Heart right ventricle (tissue), 16 donors: ENCODE measurements at regions of chr2 and their contacts with region 1.

Region 1: GRCh38 chr2:1665745-1666505 is 78.4 kb downstream of the PXDN start:
- DNase-seq: no peak
- ATAC-seq: peak in 1 of 8 donors; percentile 33
- H3K4me3 ChIP-seq: no peak overlapping the region
- H3K27ac ChIP-seq: no peak overlapping the region
- H3K4me1 ChIP-seq: no peaks in the 10 kb centered on the region
- H3K27me3 ChIP-seq: no peaks in the 10 kb centered on the region
- CTCF ChIP-seq: no peak

Region 2: GRCh38 chr2:1278861-1279260 is 387.1 kb before region 1 on chr2:
- intact Hi-C with region 1: no loop called
- DNase-seq: no peak
- ATAC-seq: no peak
- H3K4me3 ChIP-seq: no peak overlapping the region
- H3K27ac ChIP-seq: no peak overlapping the region
- H3K4me1 ChIP-seq: peaks cover 0 to 20% (median 0%) of the 10 kb centered on the region in 9 donors
- H3K27me3 ChIP-seq: peaks cover 0 to 6% (median 0%) of the 10 kb centered on the region in 7 donors
- CTCF ChIP-seq: no peak

Region 3: DNA sequence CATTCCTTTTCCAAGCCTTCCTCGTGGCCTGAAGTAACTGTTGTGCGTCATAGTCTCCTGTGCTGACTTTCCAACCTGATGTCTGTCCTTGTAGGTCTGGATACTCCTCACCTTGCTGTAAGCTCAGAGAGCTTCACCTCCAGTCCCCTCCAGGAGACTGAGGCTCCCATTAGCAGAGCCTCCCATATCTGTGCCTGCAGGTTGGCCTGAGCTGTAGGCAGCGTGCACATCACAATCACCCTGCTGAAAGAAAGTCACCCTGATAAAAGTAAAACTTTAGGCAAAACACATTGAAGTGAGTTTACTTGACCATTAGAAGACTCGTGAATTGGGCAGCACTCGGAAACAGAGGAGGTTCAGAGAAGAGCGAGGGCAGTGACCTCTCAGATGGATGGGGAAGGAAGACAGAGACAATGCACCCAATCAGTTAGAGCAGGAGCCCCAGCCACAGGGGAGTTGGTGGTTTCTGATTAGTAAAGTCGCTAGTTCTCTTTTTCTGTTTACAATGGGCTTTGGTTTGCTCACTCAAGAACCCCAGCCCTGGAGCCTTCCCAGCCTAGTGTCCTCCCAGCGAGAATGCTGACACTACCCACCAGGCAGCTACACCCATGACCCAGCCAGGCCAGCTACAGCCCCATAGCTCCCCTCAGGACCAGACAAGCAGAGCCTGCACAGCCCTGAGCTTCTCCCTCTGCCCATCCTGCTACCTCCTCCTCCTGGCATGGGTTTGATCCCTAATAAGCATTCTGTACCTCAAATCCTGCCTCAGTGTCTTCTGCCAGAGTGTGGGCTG is 264.8 kb before region 1 on chr2:
- intact Hi-C with region 1: no loop called
- DNase-seq: no peak
- ATAC-seq: no peak
- H3K4me3 ChIP-seq: no peak overlapping the region
- H3K27ac ChIP-seq: no peak overlapping the region
- H3K4me1 ChIP-seq: no peaks in the 10 kb centered on the region
- H3K27me3 ChIP-seq: peaks cover 0 to 4% (median 0%) of the 10 kb centered on the region in 7 donors
- CTCF ChIP-seq: no peak

Region 4: DNA sequence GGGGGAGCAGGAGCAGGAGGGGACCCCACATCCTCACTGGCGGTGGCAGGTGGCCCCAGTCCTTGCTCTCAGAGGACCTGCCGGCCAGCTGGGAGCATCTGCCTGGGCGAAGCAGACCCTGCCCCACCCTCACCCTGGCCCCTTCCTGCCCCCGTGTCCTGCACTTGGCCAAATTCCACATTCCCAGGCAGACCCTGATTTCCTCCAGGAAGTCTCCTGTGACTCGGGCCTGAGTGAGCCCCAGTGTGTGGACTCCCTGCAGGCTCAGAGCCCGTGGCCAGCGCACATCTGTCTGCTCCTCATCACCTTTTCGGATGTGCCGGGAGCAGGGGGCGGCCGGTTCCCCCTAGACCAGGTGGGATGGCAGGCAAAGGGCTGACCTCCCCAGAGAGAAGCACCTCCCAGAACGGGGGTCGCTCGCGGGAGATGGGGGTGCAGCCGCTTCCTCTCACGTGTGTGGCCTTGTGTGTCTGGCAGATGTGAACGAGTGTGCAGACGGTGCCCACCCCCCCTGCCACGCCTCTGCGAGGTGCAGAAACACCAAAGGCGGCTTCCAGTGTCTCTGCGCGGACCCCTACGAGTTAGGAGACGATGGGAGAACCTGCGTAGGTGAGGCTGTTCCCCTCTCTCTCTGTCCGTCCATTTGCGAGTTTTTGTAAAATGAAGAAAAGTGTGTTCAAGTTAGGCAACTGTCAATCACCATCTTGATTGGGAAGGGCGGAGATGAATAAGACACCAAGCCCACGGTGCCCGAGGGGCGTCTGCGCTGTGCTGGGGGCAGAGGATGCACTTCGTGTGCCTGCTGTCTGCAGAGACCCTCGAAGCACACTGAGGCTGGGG is 162.2 kb before region 1 on chr2:
- intact Hi-C with region 1: loop called in 1 of 10 experiments (anchors 2 kb)
- DNase-seq: no peak
- ATAC-seq: peak in 7 of 8 donors; percentile 9 to 62 (median 36)
- H3K4me3 ChIP-seq: no peak overlapping the region
- H3K27ac ChIP-seq: no peak overlapping the region
- H3K4me1 ChIP-seq: peaks cover 0 to 9% (median 0%) of the 10 kb centered on the region in 9 donors
- H3K27me3 ChIP-seq: peaks cover 0 to 4% (median 0%) of the 10 kb centered on the region in 7 donors
- CTCF ChIP-seq: no peak

Region 5: GRCh38 chr2:2014251-2014771 is 348.4 kb after region 1 on chr2:
- intact Hi-C with region 1: no loop called
- DNase-seq: peak; percentile 23 to 38
- ATAC-seq: peak; percentile 32 to 91 (median 74)
- H3K4me3 ChIP-seq: no peak overlapping the region
- H3K27ac ChIP-seq: peak overlapping the region in 4 of 10 donors; percentile 19 to 61 (median 28)
- H3K4me1 ChIP-seq: peaks cover 5 to 47% (median 22%) of the 10 kb centered on the region in 9 donors
- H3K27me3 ChIP-seq: peaks cover 0 to 4% (median 0%) of the 10 kb centered on the region in 7 donors
- CTCF ChIP-seq: no peak